ENCODE measurements at regions of chr5 and their contacts with region 1.

Region 1: GRCh38 chr5:78162253-78162862 is 132.1 kb downstream of the AP3B1 start:
- DNase-seq: no peak
- ATAC-seq: no peak
- H3K4me3 Mint-ChIP-seq: no peak overlapping the region
- H3K27ac Mint-ChIP-seq: no peak overlapping the region
- H3K4me1 Mint-ChIP-seq: no peaks in the 10 kb centered on the region
- H3K27me3 Mint-ChIP-seq: no peaks in the 10 kb centered on the region
- CTCF ChIP-seq: no peak

Region 2: DNA sequence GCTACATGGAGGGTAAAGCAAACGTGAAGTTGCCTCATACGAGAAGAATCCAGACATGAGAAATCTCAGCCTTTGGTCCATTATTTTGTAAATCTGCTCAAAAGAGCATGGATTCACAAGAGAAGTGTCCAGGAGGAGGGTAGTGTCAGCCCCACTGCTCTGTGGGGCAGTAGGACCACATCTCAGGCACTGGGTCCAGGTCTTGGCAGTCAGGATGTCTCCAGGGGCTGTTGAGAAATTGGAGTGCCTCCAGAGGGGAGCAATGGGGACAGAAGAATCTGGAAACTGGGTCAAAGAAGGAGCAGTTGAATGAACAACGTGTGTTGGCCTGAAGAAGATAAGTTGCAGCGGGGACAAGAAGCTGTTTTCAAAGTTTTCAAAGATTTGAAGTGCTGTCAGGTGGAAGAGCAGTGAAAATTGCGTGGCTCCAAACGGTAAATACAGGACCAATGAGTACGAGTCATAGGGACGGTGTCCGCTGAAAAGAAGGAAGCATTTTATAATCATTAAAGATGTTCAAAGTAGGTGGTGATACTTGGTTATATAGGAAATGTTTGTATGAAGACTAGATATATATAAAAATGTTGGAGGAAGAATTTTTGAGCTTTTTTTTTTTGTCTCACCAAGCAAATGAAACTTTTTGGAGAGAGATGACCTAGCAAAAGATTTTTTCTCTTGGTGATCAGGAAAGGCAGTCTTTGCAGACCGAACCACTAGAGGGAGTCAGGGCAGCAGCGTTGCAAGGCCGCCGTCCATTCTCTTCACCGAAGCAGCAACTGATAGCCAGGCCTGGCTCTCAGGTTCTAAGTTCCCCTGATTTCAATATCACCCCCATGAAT is 1018.1 kb before region 1 on chr5:
- CTCF ChIA-PET with region 1: no interaction called
- POLR2A ChIA-PET with region 1: no interaction called
- intact Hi-C with region 1: loop called (anchors 1 kb)
- DNase-seq: no peak
- ATAC-seq: peak; percentile 65
- H3K4me3 Mint-ChIP-seq: no peak overlapping the region
- H3K27ac Mint-ChIP-seq: no peak overlapping the region
- H3K4me1 Mint-ChIP-seq: peaks cover 2% of the 10 kb centered on the region
- H3K27me3 Mint-ChIP-seq: peaks cover 2% of the 10 kb centered on the region
- CTCF ChIP-seq: no peak

Region 3: DNA sequence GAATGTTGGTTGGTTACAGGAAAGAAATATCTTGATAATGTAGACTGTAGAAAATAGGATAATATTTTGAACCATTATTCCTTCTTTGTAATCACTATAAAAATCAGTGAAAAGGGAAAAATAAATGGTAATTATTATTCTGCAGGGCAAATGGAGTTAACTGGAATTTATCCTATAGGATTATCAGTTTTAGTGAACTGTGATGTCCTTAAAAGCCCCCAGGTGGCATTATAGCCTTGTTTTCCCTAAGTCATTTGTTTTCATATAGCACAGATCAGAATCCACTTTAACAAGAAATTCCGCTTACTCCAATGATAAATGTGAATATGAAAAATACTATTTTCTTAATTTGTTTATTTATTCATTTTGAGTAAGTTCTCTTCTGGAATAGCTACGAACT is 644.1 kb before region 1 on chr5:
- CTCF ChIA-PET with region 1: no interaction called
- POLR2A ChIA-PET with region 1: no interaction called
- intact Hi-C with region 1: loop called (anchors 1 kb)
- DNase-seq: no peak
- ATAC-seq: no peak
- H3K4me3 Mint-ChIP-seq: no peak overlapping the region
- H3K27ac Mint-ChIP-seq: no peak overlapping the region
- H3K4me1 Mint-ChIP-seq: no peaks in the 10 kb centered on the region
- H3K27me3 Mint-ChIP-seq: peaks cover 5% of the 10 kb centered on the region
- CTCF ChIP-seq: no peak

Region 4: GRCh38 chr5:77560677-77561263 is 601.6 kb before region 1 on chr5:
- CTCF ChIA-PET with region 1: interaction called, 4 read pairs
- POLR2A ChIA-PET with region 1: no interaction called
- intact Hi-C with region 1: loop called (anchors 5 kb)
- DNase-seq: no peak
- ATAC-seq: no peak
- H3K4me3 Mint-ChIP-seq: no peak overlapping the region
- H3K27ac Mint-ChIP-seq: no peak overlapping the region
- H3K4me1 Mint-ChIP-seq: no peaks in the 10 kb centered on the region
- H3K27me3 Mint-ChIP-seq: peaks cover 4% of the 10 kb centered on the region
- CTCF ChIP-seq: no peak

Region 5: DNA sequence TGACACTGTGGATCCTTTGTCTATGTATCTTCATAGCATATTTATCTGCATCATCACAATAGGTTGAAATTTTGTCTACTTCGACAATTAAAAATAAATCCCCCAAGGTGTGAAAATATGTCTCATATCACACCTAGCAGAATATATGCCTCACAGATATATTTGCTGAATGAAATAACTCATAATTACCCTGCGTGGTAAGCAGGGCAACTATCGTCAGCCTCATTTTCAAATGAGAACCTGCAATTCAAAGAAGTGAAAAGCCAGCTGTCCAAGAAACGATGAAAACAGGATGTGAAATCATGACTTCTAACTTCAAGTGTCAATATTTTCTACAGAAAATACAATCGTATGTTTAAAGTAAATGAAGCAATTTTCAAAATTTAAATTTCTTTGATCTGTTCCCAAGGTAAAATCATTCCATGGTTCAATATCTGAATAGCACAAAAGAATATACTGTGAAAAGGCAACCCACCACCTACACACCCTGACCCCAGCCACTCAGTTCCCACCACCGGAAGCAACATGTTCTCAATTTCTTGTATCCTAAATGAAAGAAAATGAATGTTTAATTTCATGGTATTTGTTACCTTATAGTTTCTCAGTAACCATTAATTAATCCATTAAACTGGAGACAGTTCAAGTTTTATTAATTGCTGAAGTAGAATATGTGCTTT is 443.3 kb before region 1 on chr5:
- CTCF ChIA-PET with region 1: no interaction called
- POLR2A ChIA-PET with region 1: no interaction called
- intact Hi-C with region 1: loop called (anchors 10 kb)
- DNase-seq: no peak
- ATAC-seq: peak; percentile 64
- H3K4me3 Mint-ChIP-seq: peak overlapping the region; percentile 53
- H3K27ac Mint-ChIP-seq: peak overlapping the region; percentile 46
- H3K4me1 Mint-ChIP-seq: peaks cover 39% of the 10 kb centered on the region
- H3K27me3 Mint-ChIP-seq: no peaks in the 10 kb centered on the region
- CTCF ChIP-seq: no peak

Region 6: DNA sequence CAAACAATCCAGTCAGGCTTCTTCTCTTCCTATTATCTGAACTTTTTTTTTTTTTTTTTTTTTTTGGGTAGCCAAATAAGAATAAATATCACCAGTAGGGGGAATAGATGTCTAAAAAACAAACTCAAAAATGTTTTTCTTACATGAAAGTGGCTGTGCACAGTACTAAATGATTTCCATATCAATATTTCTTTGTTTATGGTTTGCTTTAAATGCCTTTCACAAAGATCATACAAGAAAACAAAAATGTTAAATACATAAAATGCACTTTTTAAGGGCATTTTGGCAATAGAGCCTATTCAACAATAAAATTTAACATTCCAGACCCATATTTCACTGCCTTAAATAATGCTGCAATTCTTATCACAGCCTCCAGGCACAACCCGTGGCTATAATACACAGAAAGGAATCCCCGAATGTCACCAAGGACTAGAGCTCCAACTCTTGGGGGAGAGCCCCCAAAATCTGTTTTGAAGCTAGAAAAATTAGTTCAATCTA is 295.1 kb before region 1 on chr5:
- CTCF ChIA-PET with region 1: no interaction called
- POLR2A ChIA-PET with region 1: no interaction called
- intact Hi-C with region 1: loop called (anchors 2 kb)
- DNase-seq: no peak
- ATAC-seq: no peak
- H3K4me3 Mint-ChIP-seq: no peak overlapping the region
- H3K27ac Mint-ChIP-seq: no peak overlapping the region
- H3K4me1 Mint-ChIP-seq: no peaks in the 10 kb centered on the region
- H3K27me3 Mint-ChIP-seq: no peaks in the 10 kb centered on the region
- CTCF ChIP-seq: no peak

Region 7: DNA sequence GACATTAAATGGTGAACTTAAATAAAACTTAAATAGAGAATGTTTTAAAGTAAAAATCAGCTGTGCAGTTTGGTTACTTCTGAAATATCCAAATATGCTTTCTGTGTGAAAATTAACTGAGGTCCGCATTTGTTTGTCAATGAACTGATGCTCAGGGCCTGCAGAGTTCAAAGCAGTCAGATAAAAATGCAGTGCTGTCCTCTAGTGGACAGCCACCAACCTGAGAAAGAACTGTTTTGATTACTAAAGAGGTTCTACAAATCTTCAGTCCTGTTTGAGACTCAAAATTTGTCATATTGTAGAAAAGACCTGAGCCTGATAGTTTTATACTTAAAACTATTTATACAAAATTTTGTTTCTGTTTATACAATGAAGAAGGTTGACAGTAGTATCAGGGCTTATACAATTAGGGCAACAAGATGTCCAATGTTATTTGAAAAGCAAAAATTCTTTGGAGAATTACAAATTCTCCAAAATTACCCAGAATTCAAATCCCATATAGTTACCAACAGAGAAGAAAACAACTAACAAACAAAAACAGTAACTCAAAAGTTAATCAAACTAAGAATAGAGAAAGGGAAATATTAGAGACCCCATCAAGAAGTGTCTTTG is 153.9 kb before region 1 on chr5:
- CTCF ChIA-PET with region 1: no interaction called
- POLR2A ChIA-PET with region 1: no interaction called
- intact Hi-C with region 1: loop called (anchors 2 kb)
- DNase-seq: no peak
- ATAC-seq: no peak
- H3K4me3 Mint-ChIP-seq: no peak overlapping the region
- H3K27ac Mint-ChIP-seq: no peak overlapping the region
- H3K4me1 Mint-ChIP-seq: no peaks in the 10 kb centered on the region
- H3K27me3 Mint-ChIP-seq: no peaks in the 10 kb centered on the region
- CTCF ChIP-seq: peak; percentile 47

Region 8: GRCh38 chr5:78433972-78434371 is 271.6 kb after region 1 on chr5:
- CTCF ChIA-PET with region 1: no interaction called
- POLR2A ChIA-PET with region 1: no interaction called
- intact Hi-C with region 1: no loop called
- DNase-seq: no peak
- ATAC-seq: no peak
- H3K4me3 Mint-ChIP-seq: no peak overlapping the region
- H3K27ac Mint-ChIP-seq: no peak overlapping the region
- H3K4me1 Mint-ChIP-seq: peaks cover 8% of the 10 kb centered on the region
- H3K27me3 Mint-ChIP-seq: no peaks in the 10 kb centered on the region
- CTCF ChIP-seq: no peak

Measured in activated B cell treated with CpG ODN at 0.5 μM for 24 hours (primary cell).